CD4-positive, alpha-beta memory T cell (primary cell): ENCODE measurements at regions of chr11 and their contacts with region 1.

Region 1: DNA sequence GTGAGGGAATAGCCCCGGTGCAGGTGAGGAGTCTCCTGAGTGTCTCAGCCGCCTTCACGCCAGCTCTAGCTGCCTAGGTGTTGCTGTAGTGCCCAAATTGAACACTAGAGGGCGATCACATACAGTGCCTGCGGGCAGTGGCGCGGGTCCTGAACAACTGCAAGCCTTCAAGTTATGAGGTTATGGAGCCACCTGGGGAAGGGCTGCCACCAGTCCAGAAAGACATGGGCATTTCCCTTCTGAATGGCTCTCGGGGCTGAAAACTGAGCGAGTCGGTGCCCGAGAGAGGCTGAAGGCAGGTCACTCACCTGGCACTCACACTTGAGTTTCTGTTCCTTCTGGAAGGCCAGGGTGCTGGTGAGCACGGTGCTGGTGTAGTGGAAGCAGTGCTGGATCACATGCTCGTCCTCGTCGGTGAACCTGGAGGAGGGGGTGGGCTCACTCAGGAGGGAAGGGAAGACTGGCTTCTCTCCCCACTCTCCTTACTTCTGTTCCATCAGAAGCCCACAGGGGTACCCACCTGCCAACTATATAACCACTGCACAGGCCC is 88.4 kb downstream of the PDE2A start:
- DNase-seq: peak; percentile 66 to 77 (median 71)
- H3K4me3 ChIP-seq: peak overlapping the region; percentile 47 to 50
- H3K4me3 Mint-ChIP-seq: peak overlapping the region; percentile 79 to 97 (median 92)
- H3K27ac ChIP-seq: no peak overlapping the region
- H3K27ac Mint-ChIP-seq: peak overlapping the region in 6 of 7 donors; percentile 33 to 97 (median 70)
- H3K4me1 ChIP-seq: peaks cover 34% of the 10 kb centered on the region
- H3K4me1 Mint-ChIP-seq: peaks cover 14 to 52% (median 28%) of the 10 kb centered on the region in 4 donors
- H3K27me3 ChIP-seq: peaks cover 11% of the 10 kb centered on the region
- H3K27me3 Mint-ChIP-seq: peaks cover 17 to 37% of the 10 kb centered on the region in 2 donors

Region 2: DNA sequence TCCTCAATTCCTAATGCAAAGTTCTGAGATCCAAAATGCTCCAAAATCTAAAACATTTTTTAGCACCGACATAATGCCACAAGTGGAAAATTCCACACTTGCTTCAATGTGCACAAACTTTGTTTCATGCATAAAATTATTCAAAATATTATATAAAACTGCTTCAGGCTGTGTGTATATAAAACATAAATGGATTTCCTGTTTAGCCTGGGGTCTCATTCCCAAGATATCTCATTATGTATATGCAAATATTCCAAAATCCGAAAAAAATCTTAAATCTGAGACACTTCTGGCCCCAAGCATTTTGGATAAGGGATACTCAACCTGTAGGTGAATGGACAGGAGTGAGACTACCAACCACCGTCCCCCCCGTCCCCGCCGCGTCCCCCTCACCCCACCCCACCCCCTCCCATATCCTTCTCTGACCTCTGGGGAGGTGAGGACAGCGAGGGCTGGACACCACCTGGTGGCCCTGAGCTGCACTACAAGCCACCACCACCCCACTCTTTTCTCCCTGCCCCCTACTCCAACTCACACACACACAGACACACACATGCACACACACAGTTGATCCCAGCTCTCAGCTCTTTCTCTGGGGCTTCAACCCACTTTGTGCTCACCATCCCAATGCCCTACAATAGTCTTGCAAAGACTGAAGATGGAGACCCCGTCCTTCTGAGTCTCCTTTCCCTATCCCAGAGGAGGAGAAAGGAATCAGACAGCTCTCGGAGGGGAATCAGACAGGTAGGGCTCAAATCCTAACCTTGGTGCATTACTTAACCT is 12.6 kb before region 1 on chr11:
- CTCF ChIA-PET with region 1: interaction called, 20 read pairs
- POLR2A ChIA-PET with region 1: no interaction called
- intact Hi-C with region 1: no loop called
- DNase-seq: peak in 3 of 5 donors; percentile 16 to 25 (median 25)
- H3K4me3 ChIP-seq: no peak overlapping the region
- H3K4me3 Mint-ChIP-seq: no peak overlapping the region
- H3K27ac ChIP-seq: no peak overlapping the region
- H3K27ac Mint-ChIP-seq: peak overlapping the region in 1 of 7 donors; percentile 15
- H3K4me1 ChIP-seq: no peaks in the 10 kb centered on the region
- H3K4me1 Mint-ChIP-seq: peaks cover 0 to 11% (median 1%) of the 10 kb centered on the region in 4 donors
- H3K27me3 ChIP-seq: no peaks in the 10 kb centered on the region
- H3K27me3 Mint-ChIP-seq: peaks cover 6 to 10% of the 10 kb centered on the region in 2 donors

Region 3: GRCh38 chr11:72609045-72609444 is 23.2 kb after region 1 on chr11:
- CTCF ChIA-PET with region 1: interaction called, 7 read pairs
- POLR2A ChIA-PET with region 1: no interaction called
- intact Hi-C with region 1: loop called (anchors 1 kb)
- DNase-seq: peak in 1 of 5 donors; percentile 9
- H3K4me3 ChIP-seq: no peak overlapping the region
- H3K4me3 Mint-ChIP-seq: no peak overlapping the region
- H3K27ac ChIP-seq: no peak overlapping the region
- H3K27ac Mint-ChIP-seq: no peak overlapping the region
- H3K4me1 ChIP-seq: no peaks in the 10 kb centered on the region
- H3K4me1 Mint-ChIP-seq: peaks cover 2 to 13% (median 7%) of the 10 kb centered on the region in 4 donors
- H3K27me3 ChIP-seq: peaks cover 5% of the 10 kb centered on the region
- H3K27me3 Mint-ChIP-seq: peaks cover 20 to 28% of the 10 kb centered on the region in 2 donors

Region 4: GRCh38 chr11:72642884-72643511 is 57.2 kb after region 1 on chr11:
- CTCF ChIA-PET with region 1: interaction called, 32 read pairs
- POLR2A ChIA-PET with region 1: interaction called, 3 read pairs
- intact Hi-C with region 1: loop called (anchors 1 kb)
- DNase-seq: peak in 4 of 5 donors; percentile 66 to 75 (median 67)
- H3K4me3 ChIP-seq: peak overlapping the region in 1 of 2 donors; percentile 47
- H3K4me3 Mint-ChIP-seq: peak overlapping the region in 5 of 8 donors; percentile 10 to 76 (median 47)
- H3K27ac ChIP-seq: no peak overlapping the region
- H3K27ac Mint-ChIP-seq: no peak overlapping the region
- H3K4me1 ChIP-seq: no peaks in the 10 kb centered on the region
- H3K4me1 Mint-ChIP-seq: peaks cover 0 to 9% (median 0%) of the 10 kb centered on the region in 4 donors
- H3K27me3 ChIP-seq: peaks cover 11% of the 10 kb centered on the region
- H3K27me3 Mint-ChIP-seq: peaks cover 3% of the 10 kb centered on the region in 2 donors

Region 5: GRCh38 chr11:72683782-72684200 is 98.0 kb after region 1 on chr11:
- CTCF ChIA-PET with region 1: interaction called, 8 read pairs
- POLR2A ChIA-PET with region 1: no interaction called
- intact Hi-C with region 1: loop called (anchors 1 kb)
- DNase-seq: peak; percentile 43 to 58 (median 53)
- H3K4me3 ChIP-seq: no peak overlapping the region
- H3K4me3 Mint-ChIP-seq: no peak overlapping the region
- H3K27ac ChIP-seq: no peak overlapping the region
- H3K27ac Mint-ChIP-seq: peak overlapping the region in 2 of 7 donors; percentile 13 to 57
- H3K4me1 ChIP-seq: no peaks in the 10 kb centered on the region
- H3K4me1 Mint-ChIP-seq: peaks cover 11 to 23% (median 15%) of the 10 kb centered on the region in 4 donors
- H3K27me3 ChIP-seq: no peaks in the 10 kb centered on the region
- H3K27me3 Mint-ChIP-seq: no peaks in the 10 kb centered on the region

Region 6: DNA sequence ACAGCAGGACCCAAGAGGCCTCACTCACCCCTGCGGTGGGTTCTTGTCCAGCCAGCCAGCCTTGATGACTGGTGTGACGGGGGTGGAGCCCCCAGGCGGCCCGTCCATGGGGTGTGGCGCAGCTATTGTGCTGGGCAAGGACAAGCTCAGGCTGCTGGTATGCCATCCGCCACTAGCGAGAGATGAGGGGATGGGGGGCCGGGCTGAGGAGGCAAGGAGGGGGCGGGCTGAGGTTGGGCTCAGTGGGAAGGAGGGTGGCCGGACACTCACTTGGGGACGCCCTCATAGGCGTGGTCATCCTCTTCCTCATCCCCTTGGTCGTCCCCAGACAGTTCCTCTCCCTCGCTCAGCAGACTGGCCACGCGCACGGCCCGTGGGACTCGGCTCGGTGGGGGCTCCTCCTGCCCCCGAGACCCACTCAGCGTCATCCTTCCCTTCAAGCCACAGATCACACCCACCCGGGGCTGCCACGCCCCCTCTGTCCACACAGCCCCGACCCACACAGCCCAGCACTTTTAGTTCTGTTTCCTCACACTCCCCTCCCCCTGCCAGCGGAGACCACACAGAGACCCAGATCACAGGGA is 126.4 kb after region 1 on chr11:
- CTCF ChIA-PET with region 1: no interaction called
- POLR2A ChIA-PET with region 1: no interaction called
- intact Hi-C with region 1: no loop called
- DNase-seq: no peak
- H3K4me3 ChIP-seq: no peak overlapping the region
- H3K4me3 Mint-ChIP-seq: no peak overlapping the region
- H3K27ac ChIP-seq: no peak overlapping the region
- H3K27ac Mint-ChIP-seq: peak overlapping the region in 1 of 7 donors; percentile 63
- H3K4me1 ChIP-seq: peaks cover 22% of the 10 kb centered on the region
- H3K4me1 Mint-ChIP-seq: peaks cover 9 to 27% (median 19%) of the 10 kb centered on the region in 4 donors
- H3K27me3 ChIP-seq: no peaks in the 10 kb centered on the region
- H3K27me3 Mint-ChIP-seq: no peaks in the 10 kb centered on the region

Region 7: DNA sequence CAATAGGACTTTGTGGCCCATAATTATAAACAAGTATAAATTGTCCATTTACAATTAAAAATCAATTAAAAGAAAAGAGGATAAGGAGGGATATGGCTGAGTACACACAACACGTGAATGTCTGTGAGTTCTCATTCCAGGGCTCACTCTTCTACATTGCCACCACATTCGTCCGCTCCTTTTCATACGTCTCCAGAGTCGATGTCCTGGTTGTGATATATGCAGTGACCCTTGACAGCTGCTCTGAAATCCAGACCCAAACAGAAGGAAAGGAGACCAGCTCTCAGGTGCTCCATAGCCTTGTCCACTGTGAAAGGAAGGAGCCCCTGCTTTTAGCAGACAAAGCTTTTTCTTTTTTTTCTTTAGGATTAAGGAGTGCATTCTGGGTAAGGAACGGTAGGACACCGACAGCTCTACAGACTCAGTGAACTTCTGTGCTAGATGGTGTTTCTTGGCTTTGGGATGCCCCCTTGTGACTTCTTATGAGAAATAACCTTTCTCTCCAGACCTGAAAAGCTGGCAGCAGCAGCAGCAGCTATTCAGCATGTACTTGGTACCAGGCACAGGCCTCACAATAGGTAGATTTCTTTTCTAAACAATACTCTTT is 1345.3 kb after region 1 on chr11:
- CTCF ChIA-PET with region 1: no interaction called
- POLR2A ChIA-PET with region 1: no interaction called
- intact Hi-C with region 1: no loop called
- DNase-seq: peak in 4 of 5 donors; percentile 4 to 16 (median 13)
- H3K4me3 ChIP-seq: no peak overlapping the region
- H3K4me3 Mint-ChIP-seq: no peak overlapping the region
- H3K27ac ChIP-seq: no peak overlapping the region
- H3K27ac Mint-ChIP-seq: peak overlapping the region in 3 of 7 donors; percentile 10 to 35 (median 29)
- H3K4me1 ChIP-seq: no peaks in the 10 kb centered on the region
- H3K4me1 Mint-ChIP-seq: no peaks in the 10 kb centered on the region
- H3K27me3 ChIP-seq: no peaks in the 10 kb centered on the region
- H3K27me3 Mint-ChIP-seq: no peaks in the 10 kb centered on the region